GM12878 (cell line): ENCODE measurements at regions of chr3 and their contacts with region 1.

Region 1: GRCh38 chr3:28134792-28135375 is 106.5 kb upstream of the CMC1 start:
- DNase-seq: no peak
- ATAC-seq: peak; percentile 16
- H3K4me3 ChIP-seq: no peak overlapping the region
- H3K27ac ChIP-seq: no peak overlapping the region
- H3K4me1 ChIP-seq: no peaks in the 10 kb centered on the region
- H3K27me3 ChIP-seq: no peaks in the 10 kb centered on the region
- CTCF ChIP-seq: no peak
- EP300 ChIP-seq: no peak
- POLR2A ChIP-seq: no peak
- RAD21 ChIP-seq: no peak

Region 2: DNA sequence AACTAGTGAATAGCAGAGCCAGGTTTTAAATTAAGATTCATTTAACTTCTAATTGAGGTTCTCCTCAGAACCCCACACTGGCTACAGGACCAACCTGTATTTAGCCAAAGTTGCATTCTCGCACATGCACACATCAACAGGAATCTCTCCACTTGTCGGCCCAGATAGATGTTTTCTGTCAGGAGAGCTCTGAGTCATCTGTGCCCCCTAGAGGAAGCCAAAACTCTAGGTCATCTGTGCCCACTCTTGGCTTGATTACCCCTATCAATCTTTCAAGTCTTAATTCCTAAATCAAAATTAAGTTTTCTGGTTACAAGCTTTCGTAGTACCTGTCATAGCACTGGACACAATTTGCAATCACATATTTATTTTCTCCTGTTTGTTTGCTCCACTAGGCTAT is 307.8 kb before region 1 on chr3:
- CTCF ChIA-PET with region 1: no interaction called
- POLR2A ChIA-PET with region 1: no interaction called
- RAD21 ChIA-PET with region 1: no interaction called
- SMC1A ChIA-PET with region 1: no interaction called
- in situ Hi-C with region 1: no loop called
- intact Hi-C with region 1: no loop called
- DNase-seq: no peak
- ATAC-seq: peak; percentile 48; the same call in 2 of the 3 replicates
- H3K4me3 ChIP-seq: no peak overlapping the region
- H3K27ac ChIP-seq: no peak overlapping the region
- H3K4me1 ChIP-seq: no peaks in the 10 kb centered on the region
- H3K27me3 ChIP-seq: no peaks in the 10 kb centered on the region
- CTCF ChIP-seq: no peak; a peak in 1 of 6 replicates
- EP300 ChIP-seq: no peak
- POLR2A ChIP-seq: no peak
- RAD21 ChIP-seq: no peak

Region 3: DNA sequence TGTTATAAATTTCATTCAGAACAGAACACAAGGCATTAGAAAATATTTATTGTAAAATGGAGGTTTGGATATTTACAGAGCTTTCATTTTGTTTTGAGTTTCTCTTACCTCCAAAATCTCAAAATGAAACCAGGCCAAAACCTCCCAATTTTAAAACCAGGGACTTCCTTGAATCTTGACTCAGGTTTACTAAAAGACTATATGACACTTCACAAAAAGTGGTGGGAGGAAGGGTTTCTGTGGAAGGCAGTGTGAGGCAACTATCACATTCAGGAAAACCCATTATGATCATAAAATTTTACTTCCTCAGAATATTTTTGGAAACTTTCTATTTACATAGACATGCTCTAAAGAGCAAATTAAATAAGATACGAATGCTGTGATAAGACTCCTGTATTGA is 207.0 kb before region 1 on chr3:
- CTCF ChIA-PET with region 1: interaction called, 3 read pairs
- POLR2A ChIA-PET with region 1: no interaction called
- RAD21 ChIA-PET with region 1: interaction called, 14 read pairs
- SMC1A ChIA-PET with region 1: interaction called, 3 read pairs
- in situ Hi-C with region 1: no loop called
- intact Hi-C with region 1: no loop called
- DNase-seq: peak; percentile 4
- ATAC-seq: peak; percentile 36
- H3K4me3 ChIP-seq: no peak overlapping the region
- H3K27ac ChIP-seq: no peak overlapping the region
- H3K4me1 ChIP-seq: no peaks in the 10 kb centered on the region
- H3K27me3 ChIP-seq: no peaks in the 10 kb centered on the region
- CTCF ChIP-seq: no peak
- EP300 ChIP-seq: no peak
- POLR2A ChIP-seq: no peak
- RAD21 ChIP-seq: no peak

Region 4: DNA sequence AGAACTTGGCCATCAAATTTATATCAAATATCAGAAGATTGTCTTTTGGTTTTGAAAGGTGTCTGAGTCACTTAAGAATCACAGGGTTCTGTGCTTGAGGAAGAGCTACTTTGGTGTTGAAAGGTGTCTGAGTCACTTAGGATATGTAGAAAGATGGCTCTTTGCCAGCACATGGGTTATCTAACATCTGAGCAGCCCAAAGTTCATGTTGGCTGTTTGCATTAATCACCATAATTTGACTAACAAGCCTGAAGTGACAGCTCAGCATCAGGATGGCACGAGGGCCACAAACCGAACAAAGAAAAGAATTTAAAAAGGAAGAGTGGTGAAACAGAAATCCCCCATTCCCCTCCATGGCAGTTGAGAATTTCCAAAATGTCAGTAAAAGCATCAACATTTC is 84.0 kb before region 1 on chr3:
- CTCF ChIA-PET with region 1: interaction called, 3 read pairs
- POLR2A ChIA-PET with region 1: no interaction called
- RAD21 ChIA-PET with region 1: interaction called, 10 read pairs
- SMC1A ChIA-PET with region 1: interaction called, 7 read pairs
- in situ Hi-C with region 1: no loop called
- intact Hi-C with region 1: no loop called
- DNase-seq: no peak
- ATAC-seq: peak; percentile 70
- H3K4me3 ChIP-seq: no peak overlapping the region
- H3K27ac ChIP-seq: no peak overlapping the region
- H3K4me1 ChIP-seq: no peaks in the 10 kb centered on the region
- H3K27me3 ChIP-seq: no peaks in the 10 kb centered on the region
- CTCF ChIP-seq: no peak
- EP300 ChIP-seq: 0 out of 4 replicates have a peak, but pooled peaks of 1 of the 2 experiments have one; percentile 6
- POLR2A ChIP-seq: no peak
- RAD21 ChIP-seq: no peak

Region 5: GRCh38 chr3:28122227-28122626 is 12.7 kb before region 1 on chr3:
- CTCF ChIA-PET with region 1: interaction called, 44 read pairs
- POLR2A ChIA-PET with region 1: interaction called, 54 read pairs
- RAD21 ChIA-PET with region 1: interaction called, 344 read pairs
- SMC1A ChIA-PET with region 1: interaction called, 602 read pairs
- in situ Hi-C with region 1: no loop called
- intact Hi-C with region 1: no loop called
- DNase-seq: no peak
- ATAC-seq: no peak
- H3K4me3 ChIP-seq: no peak overlapping the region
- H3K27ac ChIP-seq: no peak overlapping the region
- H3K4me1 ChIP-seq: no peaks in the 10 kb centered on the region
- H3K27me3 ChIP-seq: no peaks in the 10 kb centered on the region
- CTCF ChIP-seq: no peak
- EP300 ChIP-seq: no peak
- POLR2A ChIP-seq: no peak
- RAD21 ChIP-seq: no peak